ENCODE measurements at regions of chr1 and their contacts with region 1.

Region 1: GRCh38 chr1:40508375-40509341 is at the start of gene EXO5:
- DNase-seq: peak; percentile 89
- H3K4me3 Mint-ChIP-seq: peak within 1 kb of the TSS; percentile 76
- H3K27ac Mint-ChIP-seq: peak within 1 kb of the TSS; percentile 77
- H3K4me1 Mint-ChIP-seq: peaks cover 14% of the 10 kb centered on the region
- H3K27me3 Mint-ChIP-seq: no peaks in the 10 kb centered on the region
- total RNA-seq, gene EXO5: 12.3 to 12.6 TPM

Region 2: GRCh38 chr1:40449684-40450494 is 58.8 kb before region 1 on chr1 and contains the start of gene ZFP69B:
- CTCF ChIA-PET with region 1: interaction called, 4 read pairs
- POLR2A ChIA-PET with region 1: interaction called, 14 read pairs
- DNase-seq: peak; percentile 90
- H3K4me3 Mint-ChIP-seq: peak within 1 kb of the TSS; percentile 78
- H3K27ac Mint-ChIP-seq: peak within 1 kb of the TSS; percentile 82
- H3K4me1 Mint-ChIP-seq: peaks cover 23% of the 10 kb centered on the region
- H3K27me3 Mint-ChIP-seq: no peaks in the 10 kb centered on the region
- total RNA-seq, gene ZFP69B: 5.4 to 5.9 TPM

Region 3: GRCh38 chr1:40531381-40532061 is 22.9 kb after region 1 on chr1 and contains the start of gene ZNF684:
- CTCF ChIA-PET with region 1: interaction called, 15 read pairs
- POLR2A ChIA-PET with region 1: interaction called, 23 read pairs
- DNase-seq: peak; percentile 85
- H3K4me3 Mint-ChIP-seq: peak within 1 kb of the TSS; percentile 96
- H3K27ac Mint-ChIP-seq: peak within 1 kb of the TSS; percentile 81
- H3K4me1 Mint-ChIP-seq: peaks cover 25% of the 10 kb centered on the region
- H3K27me3 Mint-ChIP-seq: peaks cover 2% of the 10 kb centered on the region
- total RNA-seq, gene ZNF684: 6.6 to 6.8 TPM